HEK293 (cell line): ENCODE measurements at regions of chr15 and their contacts with region 1.

Region 1: DNA sequence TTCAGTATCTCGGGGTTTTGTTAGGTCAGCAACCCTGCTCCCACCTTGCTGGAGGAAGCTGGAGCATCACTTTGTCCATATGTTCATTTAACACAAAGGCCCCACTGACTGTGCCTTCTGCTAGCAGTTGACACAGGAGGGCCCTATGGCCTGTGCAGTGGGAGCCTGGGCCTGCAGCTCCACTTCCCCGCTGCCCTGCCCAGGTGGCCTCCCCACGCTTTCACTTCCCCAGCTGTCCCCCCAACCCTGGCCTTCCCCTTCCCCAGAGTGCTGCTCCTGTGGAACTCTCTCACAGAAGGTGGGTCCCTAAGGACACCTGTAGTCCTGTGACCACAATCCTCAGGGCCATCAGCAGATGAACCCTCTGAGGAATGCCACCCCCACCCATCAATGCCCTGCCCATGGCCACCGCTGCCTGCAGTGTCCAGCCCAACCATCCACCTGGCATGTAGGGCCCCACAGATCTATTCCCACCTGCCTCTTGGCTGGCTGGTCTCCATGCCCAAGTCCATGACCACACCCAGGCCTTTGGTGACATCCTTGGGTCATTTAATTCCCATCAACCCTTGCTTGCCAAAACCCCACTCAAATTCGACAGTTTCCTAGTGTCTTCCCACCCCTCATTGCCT is 13.5 kb downstream of the TBC1D21 start:
- H3K4me3 ChIP-seq: no peak overlapping the region
- H3K27ac ChIP-seq: no peak overlapping the region
- H3K4me1 ChIP-seq: no peaks in the 10 kb centered on the region
- CTCF ChIP-seq: no peak

Region 2: GRCh38 chr15:73873889-73874511 is 12.8 kb before region 1 on chr15:
- CTCF ChIA-PET with region 1: interaction called, 17 read pairs
- POLR2A ChIA-PET with region 1: no interaction called
- H3K4me3 ChIP-seq: no peak overlapping the region
- H3K27ac ChIP-seq: no peak overlapping the region
- H3K4me1 ChIP-seq: peaks cover 5% of the 10 kb centered on the region; the same call in 1 of the 2 replicates
- CTCF ChIP-seq: 0 out of 2 replicates have a peak, but pooled peaks have one; percentile 13